GM12878 (cell line): ENCODE measurements at regions of chr2 and their contacts with region 1.

Region 1: GRCh38 chr2:156332534-156333273 is at the start of gene NR4A2:
- DNase-seq: no peak
- ATAC-seq: peak; percentile 76
- H3K4me3 ChIP-seq: peak within 1 kb of the TSS; percentile 80
- H3K27ac ChIP-seq: peak within 1 kb of the TSS; percentile 85; the same call in 1 of the 2 replicates
- H3K4me1 ChIP-seq: peaks cover 10% of the 10 kb centered on the region
- H3K27me3 ChIP-seq: peaks cover 2 to 13% of the 10 kb centered on the region in 2 experiments
- CTCF ChIP-seq: no peak
- EP300 ChIP-seq: peak; percentile 8 to 49; a peak in 2 of 4 replicates
- POLR2A ChIP-seq: peak; percentile 60
- RAD21 ChIP-seq: no peak
- polyA plus RNA-seq, gene NR4A2: 0.40 to 0.42 TPM

Region 2: DNA sequence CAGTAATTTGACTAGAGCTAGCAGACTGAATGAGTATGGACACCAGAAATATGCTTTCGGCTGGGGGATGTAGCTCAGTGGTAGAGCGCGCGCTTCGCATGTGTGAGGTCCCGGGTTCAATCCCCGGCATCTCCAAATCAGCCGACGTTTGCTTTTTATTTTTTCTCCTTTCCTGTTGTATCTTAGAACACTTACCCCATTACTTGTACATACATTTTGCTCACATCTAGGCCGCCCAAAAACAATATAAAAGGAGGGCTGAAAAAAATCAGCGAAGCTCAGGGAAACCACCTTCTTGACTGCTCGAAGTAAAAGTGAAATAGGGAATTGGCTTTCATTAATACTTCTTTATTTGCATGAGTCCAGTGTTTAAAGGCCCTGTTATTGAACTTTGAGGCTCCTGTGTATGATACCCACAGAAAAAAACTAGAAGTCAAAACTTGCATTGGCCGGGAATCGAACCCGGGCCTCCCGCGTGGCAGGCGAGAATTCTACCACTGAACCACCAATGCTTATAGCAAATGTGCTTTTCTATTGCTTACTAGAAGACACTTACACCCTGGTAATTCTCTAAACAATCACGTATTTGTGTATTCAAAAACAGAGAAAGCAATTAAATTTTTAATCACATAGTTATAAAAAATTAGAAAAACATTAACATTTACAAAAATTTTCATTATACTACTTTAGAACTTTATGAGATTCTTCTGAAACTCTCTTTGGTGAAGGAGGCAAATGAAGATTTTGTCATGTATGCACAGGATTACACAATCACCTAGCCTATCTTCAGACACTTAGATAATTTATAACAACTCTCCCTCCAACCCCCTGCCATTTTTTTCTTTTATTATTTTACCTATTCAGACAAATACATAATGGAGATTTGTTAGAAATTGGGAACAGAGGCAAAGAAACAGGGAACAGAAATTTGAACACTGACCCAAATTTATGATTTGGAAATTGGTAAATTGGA is 68.3 kb after region 1 on chr2:
- CTCF ChIA-PET with region 1: interaction called, 22 read pairs
- POLR2A ChIA-PET with region 1: interaction called, 20 read pairs
- RAD21 ChIA-PET with region 1: interaction called, 47 read pairs
- SMC1A ChIA-PET with region 1: interaction called, 45 read pairs
- in situ Hi-C with region 1: no loop called
- intact Hi-C with region 1: no loop called
- DNase-seq: peak; percentile 82
- ATAC-seq: peak; percentile 78
- H3K4me3 ChIP-seq: peak overlapping the region; percentile 70
- H3K27ac ChIP-seq: peak overlapping the region; percentile 86
- H3K4me1 ChIP-seq: peaks cover 17% of the 10 kb centered on the region
- H3K27me3 ChIP-seq: no peaks in the 10 kb centered on the region
- CTCF ChIP-seq: no peak
- EP300 ChIP-seq: peak in 1 of 2 experiments; percentile 83; a peak in 1 of 4 replicates
- POLR2A ChIP-seq: no peak
- RAD21 ChIP-seq: no peak

Region 3: DNA sequence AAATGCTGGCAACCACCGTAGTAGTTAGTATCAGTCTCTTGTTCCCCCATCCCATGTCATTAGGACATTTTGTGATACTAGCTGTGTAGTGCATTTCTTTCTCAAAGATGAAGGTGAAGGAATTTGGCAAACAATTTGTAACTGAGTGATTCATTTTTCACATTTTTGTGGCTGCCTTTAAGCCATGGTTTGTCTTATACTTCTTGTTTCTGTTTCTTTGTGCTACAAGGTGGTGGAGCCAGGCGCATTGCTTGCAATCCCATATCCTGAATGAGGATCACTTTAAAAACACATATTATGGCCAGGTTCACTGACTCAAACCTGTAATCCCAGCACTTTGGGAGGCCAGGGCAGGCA is 144.1 kb after region 1 on chr2:
- CTCF ChIA-PET with region 1: interaction called, 5 read pairs
- POLR2A ChIA-PET with region 1: interaction called, 4 read pairs
- RAD21 ChIA-PET with region 1: interaction called, 17 read pairs
- SMC1A ChIA-PET with region 1: interaction called, 22 read pairs
- in situ Hi-C with region 1: no loop called
- intact Hi-C with region 1: no loop called
- DNase-seq: peak; percentile 77
- ATAC-seq: peak; percentile 86
- H3K4me3 ChIP-seq: no peak overlapping the region
- H3K27ac ChIP-seq: peak overlapping the region; percentile 66
- H3K4me1 ChIP-seq: peaks cover 39% of the 10 kb centered on the region; the same call in 1 of the 2 replicates
- H3K27me3 ChIP-seq: no peaks in the 10 kb centered on the region
- CTCF ChIP-seq: no peak
- EP300 ChIP-seq: peak; percentile 24 to 52; a peak in 1 of 4 replicates
- POLR2A ChIP-seq: no peak
- RAD21 ChIP-seq: no peak

Region 4: GRCh38 chr2:156538083-156538504 is 205.4 kb after region 1 on chr2:
- CTCF ChIA-PET with region 1: interaction called, 7 read pairs
- POLR2A ChIA-PET with region 1: interaction called, 5 read pairs
- RAD21 ChIA-PET with region 1: interaction called, 18 read pairs
- SMC1A ChIA-PET with region 1: interaction called, 7 read pairs
- in situ Hi-C with region 1: no loop called
- intact Hi-C with region 1: loop called (anchors 5 kb)
- DNase-seq: peak; percentile 53
- ATAC-seq: peak; percentile 87
- H3K4me3 ChIP-seq: no peak overlapping the region
- H3K27ac ChIP-seq: peak overlapping the region; percentile 69
- H3K4me1 ChIP-seq: peaks cover 49% of the 10 kb centered on the region
- H3K27me3 ChIP-seq: no peaks in the 10 kb centered on the region
- CTCF ChIP-seq: no peak
- EP300 ChIP-seq: no peak
- POLR2A ChIP-seq: peak; percentile 49; the same call in 1 of the 2 replicates
- RAD21 ChIP-seq: no peak

Region 5: GRCh38 chr2:156580501-156580900 is 247.8 kb after region 1 on chr2:
- CTCF ChIA-PET with region 1: interaction called, 154 read pairs
- POLR2A ChIA-PET with region 1: interaction called, 8 read pairs
- RAD21 ChIA-PET with region 1: interaction called, 205 read pairs
- SMC1A ChIA-PET with region 1: interaction called, 244 read pairs
- in situ Hi-C with region 1: loop called (anchors 25 kb)
- intact Hi-C with region 1: no loop called
- DNase-seq: no peak
- ATAC-seq: no peak
- H3K4me3 ChIP-seq: no peak overlapping the region
- H3K27ac ChIP-seq: no peak overlapping the region
- H3K4me1 ChIP-seq: no peaks in the 10 kb centered on the region; the same call in 1 of the 2 replicates
- H3K27me3 ChIP-seq: no peaks in the 10 kb centered on the region
- CTCF ChIP-seq: no peak
- EP300 ChIP-seq: no peak
- POLR2A ChIP-seq: no peak
- RAD21 ChIP-seq: no peak

Region 6: DNA sequence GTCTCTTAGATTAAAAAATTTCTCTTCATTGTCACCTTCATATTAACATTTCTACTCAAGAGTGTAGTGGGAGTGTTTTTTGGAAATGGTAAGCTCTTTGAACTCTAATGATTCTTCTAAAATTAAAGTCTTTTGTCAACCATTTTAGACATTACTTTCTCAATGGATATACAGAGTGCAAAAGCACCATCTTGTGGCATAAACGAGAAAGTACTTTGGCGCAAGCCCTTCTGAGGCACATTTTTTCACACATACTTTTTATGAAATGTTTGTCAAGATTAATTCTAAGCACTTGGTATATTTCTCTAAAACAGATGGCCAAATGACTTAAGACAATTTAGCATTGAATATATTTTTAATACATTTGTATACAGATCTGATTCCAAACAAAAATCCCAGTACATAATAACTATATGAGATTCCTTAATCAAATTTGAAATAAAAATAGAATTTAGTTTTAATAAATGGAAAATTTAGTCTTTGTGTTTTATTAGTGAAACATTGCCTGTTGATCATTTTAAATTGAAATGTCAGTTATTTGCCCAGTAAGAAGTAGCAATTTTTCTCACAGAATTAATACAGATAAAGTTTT is 861.5 kb after region 1 on chr2:
- CTCF ChIA-PET with region 1: interaction called, 7 read pairs
- POLR2A ChIA-PET with region 1: no interaction called
- RAD21 ChIA-PET with region 1: interaction called, 18 read pairs
- SMC1A ChIA-PET with region 1: interaction called, 5 read pairs
- in situ Hi-C with region 1: no loop called
- intact Hi-C with region 1: no loop called
- DNase-seq: no peak
- ATAC-seq: peak; percentile 83
- H3K4me3 ChIP-seq: no peak overlapping the region
- H3K27ac ChIP-seq: no peak overlapping the region
- H3K4me1 ChIP-seq: peaks cover 10% of the 10 kb centered on the region; the same call in 1 of the 2 replicates
- H3K27me3 ChIP-seq: peaks cover 0 to 3% of the 10 kb centered on the region in 2 experiments; a peak in 1 of 4 replicates
- CTCF ChIP-seq: peak; percentile 59 to 77 (median 63)
- EP300 ChIP-seq: no peak
- POLR2A ChIP-seq: no peak
- RAD21 ChIP-seq: peak; percentile 93